Transverse colon (tissue), 4 donors: ENCODE measurements at regions of chr1 and their contacts with region 1.

Region 1: GRCh38 chr1:39491146-39491921 is at the start of gene BMP8A:
- DNase-seq: peak; percentile 83
- H3K4me3 ChIP-seq: peak within 1 kb of the TSS; percentile 37 to 51 (median 42)
- H3K27ac ChIP-seq: peak within 1 kb of the TSS in 3 of 4 donors; percentile 42 to 64 (median 61)
- H3K4me1 ChIP-seq: peaks cover 5 to 17% (median 11%) of the 10 kb centered on the region in 4 donors
- H3K27me3 ChIP-seq: peaks cover 40% of the 10 kb centered on the region
- CTCF ChIP-seq: no peak
- EP300 ChIP-seq: no peak
- POLR2A ChIP-seq: no peak
- total RNA-seq, gene BMP8A: 11.0 to 12.3 TPM in 2 of 4 donors, not detected in the others

Region 2: GRCh38 chr1:39170731-39171667 is 320.3 kb before region 1 on chr1:
- in situ Hi-C with region 1: no loop called
- intact Hi-C with region 1: no loop called
- DNase-seq: no peak
- H3K4me3 ChIP-seq: no peak overlapping the region
- H3K27ac ChIP-seq: peak overlapping the region in 3 of 4 donors; percentile 45 to 67 (median 63)
- H3K4me1 ChIP-seq: peaks cover 16 to 63% (median 24%) of the 10 kb centered on the region in 4 donors
- H3K27me3 ChIP-seq: no peaks in the 10 kb centered on the region
- CTCF ChIP-seq: no peak
- EP300 ChIP-seq: no peak
- POLR2A ChIP-seq: no peak

Region 3: GRCh38 chr1:39431927-39432326 is 59.4 kb before region 1 on chr1:
- in situ Hi-C with region 1: no loop called
- intact Hi-C with region 1: no loop called
- DNase-seq: no peak
- H3K4me3 ChIP-seq: no peak overlapping the region
- H3K27ac ChIP-seq: peak overlapping the region in 3 of 4 donors; percentile 7 to 23 (median 19)
- H3K4me1 ChIP-seq: peaks cover 0 to 21% (median 10%) of the 10 kb centered on the region in 4 donors
- H3K27me3 ChIP-seq: no peaks in the 10 kb centered on the region
- CTCF ChIP-seq: no peak
- EP300 ChIP-seq: no peak
- POLR2A ChIP-seq: no peak

Region 4: GRCh38 chr1:39788758-39789570 is 297.6 kb after region 1 on chr1 and contains the start of gene BMP8B:
- in situ Hi-C with region 1: loop called in 1 of 4 experiments (anchors 10 kb)
- intact Hi-C with region 1: no loop called
- DNase-seq: peak; percentile 82
- H3K4me3 ChIP-seq: peak within 1 kb of the TSS; percentile 40 to 68 (median 56)
- H3K27ac ChIP-seq: peak within 1 kb of the TSS; percentile 59 to 82 (median 74)
- H3K4me1 ChIP-seq: peaks cover 0 to 14% (median 6%) of the 10 kb centered on the region in 4 donors
- H3K27me3 ChIP-seq: peaks cover 29% of the 10 kb centered on the region
- CTCF ChIP-seq: no peak
- EP300 ChIP-seq: no peak
- POLR2A ChIP-seq: peak; percentile 53
- total RNA-seq, gene BMP8B: 1.2 to 27.2 (median 17.4) TPM